Ascending aorta (tissue), 2 donors: ENCODE measurements at regions of chr19 and their contacts with region 1.

Region 1: DNA sequence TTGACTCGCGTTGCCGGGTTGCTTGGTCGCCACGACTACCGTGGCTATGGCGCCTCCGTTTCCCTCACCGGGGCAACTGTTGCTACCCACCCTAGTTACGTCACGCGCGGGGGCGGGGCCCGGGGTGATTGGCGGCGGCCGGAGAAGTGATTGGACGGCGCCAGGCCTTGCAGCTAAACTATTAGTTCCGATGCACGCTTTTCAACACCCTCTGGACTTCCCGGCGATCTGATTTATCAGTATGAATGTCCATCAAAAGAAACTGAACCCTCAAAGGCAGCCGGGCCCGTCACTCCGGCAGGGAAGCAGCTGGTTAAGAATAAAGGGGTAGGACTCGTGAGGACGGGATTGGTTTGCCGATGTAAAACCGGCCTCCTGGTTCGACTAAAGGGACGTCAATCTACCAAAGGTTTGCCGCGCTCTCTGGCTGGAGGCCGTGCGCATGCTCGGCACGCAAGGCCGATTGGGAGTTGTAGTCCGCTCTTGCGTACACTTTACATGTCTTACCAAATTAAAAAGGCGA is at the start of gene RFX1:
- DNase-seq: peak; percentile 98 to 100
- H3K4me3 ChIP-seq: peak within 1 kb of the TSS; percentile 99 to 100
- H3K27ac ChIP-seq: peak within 1 kb of the TSS; percentile 100
- H3K4me1 ChIP-seq: peaks cover 16 to 23% of the 10 kb centered on the region in 2 donors
- H3K27me3 ChIP-seq: no peaks in the 10 kb centered on the region
- CTCF ChIP-seq: no peak
- total RNA-seq, gene RFX1: 3.3 TPM

Region 2: GRCh38 chr19:12938234-12939025 is 1067.9 kb before region 1 on chr19 and contains the start of gene CALR:
- intact Hi-C with region 1: loop called (anchors 10 kb)
- DNase-seq: peak; percentile 100
- H3K4me3 ChIP-seq: peak within 1 kb of the TSS; percentile 92 to 98
- H3K27ac ChIP-seq: peak within 1 kb of the TSS; percentile 89 to 95
- H3K4me1 ChIP-seq: peaks cover 15 to 41% of the 10 kb centered on the region in 2 donors
- H3K27me3 ChIP-seq: no peaks in the 10 kb centered on the region
- CTCF ChIP-seq: peak in 2 of 3 experiments; percentile 22 to 54
- total RNA-seq, gene CALR: 297 TPM

Region 3: GRCh38 chr19:13794757-13795589 is 211.3 kb before region 1 on chr19 and contains the start of gene ZSWIM4:
- intact Hi-C with region 1: loop called (anchors 5 kb)
- DNase-seq: peak; percentile 98 to 100
- H3K4me3 ChIP-seq: peak within 1 kb of the TSS; percentile 86 to 88
- H3K27ac ChIP-seq: peak within 1 kb of the TSS; percentile 92 to 96
- H3K4me1 ChIP-seq: peaks cover 7 to 30% of the 10 kb centered on the region in 2 donors
- H3K27me3 ChIP-seq: no peaks in the 10 kb centered on the region
- CTCF ChIP-seq: no peak
- total RNA-seq, gene ZSWIM4: 23.2 TPM

Region 4: GRCh38 chr19:13952154-13953035 is 53.9 kb before region 1 on chr19 and contains the start of gene DCAF15:
- intact Hi-C with region 1: loop called (anchors 1 kb)
- DNase-seq: peak; percentile 99 to 100
- H3K4me3 ChIP-seq: peak within 1 kb of the TSS; percentile 79 to 81
- H3K27ac ChIP-seq: peak within 1 kb of the TSS; percentile 76 to 77
- H3K4me1 ChIP-seq: peaks cover 6 to 12% of the 10 kb centered on the region in 2 donors
- H3K27me3 ChIP-seq: no peaks in the 10 kb centered on the region
- CTCF ChIP-seq: no peak
- total RNA-seq, gene DCAF15: 35.0 TPM

Region 5: GRCh38 chr19:14031719-14032480 is 25.6 kb after region 1 on chr19 and contains the start of gene IL27RA:
- intact Hi-C with region 1: no loop called
- DNase-seq: peak in 1 of 2 donors; percentile 72
- H3K4me3 ChIP-seq: peak within 1 kb of the TSS; percentile 50 to 71
- H3K27ac ChIP-seq: peak within 1 kb of the TSS in 1 of 2 donors; percentile 38
- H3K4me1 ChIP-seq: peaks cover 0 to 7% of the 10 kb centered on the region in 2 donors
- H3K27me3 ChIP-seq: no peaks in the 10 kb centered on the region
- CTCF ChIP-seq: peak in 2 of 3 experiments; percentile 36 to 51
- total RNA-seq, gene IL27RA: 4.2 TPM

Region 6: GRCh38 chr19:14073261-14073924 is 67.1 kb after region 1 on chr19:
- intact Hi-C with region 1: loop called (anchors 2 kb)
- DNase-seq: peak in 1 of 2 donors; percentile 83
- H3K4me3 ChIP-seq: peak overlapping the region; percentile 62 to 73
- H3K27ac ChIP-seq: peak overlapping the region; percentile 90 to 94
- H3K4me1 ChIP-seq: peaks cover 0 to 12% of the 10 kb centered on the region in 2 donors
- H3K27me3 ChIP-seq: no peaks in the 10 kb centered on the region
- CTCF ChIP-seq: peak in 1 of 3 experiments; percentile 97